AG04449 (cell line): ENCODE measurements at regions of chr9 and their contacts with region 1.

Region 1: GRCh38 chr9:134449221-134449894 is 123.1 kb downstream of the RXRA start:
- DNase-seq: peak; percentile 74
- H3K4me3 ChIP-seq: no peak overlapping the region
- CTCF ChIP-seq: peak; percentile 98

Region 2: GRCh38 chr9:134175808-134176598 is 273.4 kb before region 1 on chr9:
- CTCF ChIA-PET with region 1: interaction called, 138 read pairs
- POLR2A ChIA-PET with region 1: no interaction called
- DNase-seq: no peak
- H3K4me3 ChIP-seq: no peak overlapping the region
- CTCF ChIP-seq: peak; percentile 23

Region 3: GRCh38 chr9:134592018-134592818 is 142.9 kb after region 1 on chr9:
- CTCF ChIA-PET with region 1: no interaction called
- POLR2A ChIA-PET with region 1: no interaction called
- DNase-seq: no peak
- H3K4me3 ChIP-seq: peak overlapping the region; percentile 15
- CTCF ChIP-seq: no peak

Region 4: DNA sequence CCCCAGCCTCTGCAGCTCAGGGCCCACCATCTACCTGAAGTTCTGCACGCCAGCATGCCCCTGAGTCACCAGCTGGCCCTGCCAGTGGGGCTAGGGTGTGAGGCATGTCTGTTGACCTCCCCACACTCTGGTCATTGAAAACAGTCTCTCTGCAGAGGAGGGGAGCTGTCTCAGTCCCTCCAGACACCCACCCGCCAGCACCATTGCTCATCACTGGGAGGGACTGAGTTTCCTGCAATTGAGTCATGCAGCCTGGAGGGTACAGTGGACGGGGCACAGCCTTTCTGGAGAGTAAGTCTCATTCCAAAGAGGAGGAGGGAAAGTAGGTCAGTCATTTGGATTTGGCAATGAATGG is 175.4 kb after region 1 on chr9:
- CTCF ChIA-PET with region 1: interaction called, 15 read pairs
- POLR2A ChIA-PET with region 1: interaction called, 3 read pairs
- DNase-seq: peak; percentile 71
- H3K4me3 ChIP-seq: no peak overlapping the region
- CTCF ChIP-seq: no peak

Region 5: DNA sequence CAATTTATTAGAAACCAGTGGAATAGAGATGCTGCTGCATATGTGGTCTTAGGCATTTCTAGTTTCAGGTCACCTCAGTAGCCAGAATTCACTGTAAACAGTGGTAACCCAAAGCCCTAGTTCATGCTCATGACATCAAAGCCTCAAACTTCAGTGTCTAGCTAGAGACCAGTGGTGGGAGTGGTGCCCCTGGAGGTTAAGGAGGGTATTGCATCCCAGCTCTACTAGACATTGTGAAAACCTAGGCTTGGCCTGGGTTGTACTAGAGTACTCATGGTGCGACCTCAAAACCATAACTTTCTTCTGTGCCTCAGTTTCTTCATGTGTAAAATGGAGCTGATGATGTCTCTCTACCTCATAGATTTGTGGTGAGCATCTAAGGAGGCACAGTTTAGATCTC is 211.0 kb after region 1 on chr9:
- CTCF ChIA-PET with region 1: interaction called, 22 read pairs
- POLR2A ChIA-PET with region 1: no interaction called
- DNase-seq: no peak
- H3K4me3 ChIP-seq: no peak overlapping the region
- CTCF ChIP-seq: peak; percentile 69

Region 6: DNA sequence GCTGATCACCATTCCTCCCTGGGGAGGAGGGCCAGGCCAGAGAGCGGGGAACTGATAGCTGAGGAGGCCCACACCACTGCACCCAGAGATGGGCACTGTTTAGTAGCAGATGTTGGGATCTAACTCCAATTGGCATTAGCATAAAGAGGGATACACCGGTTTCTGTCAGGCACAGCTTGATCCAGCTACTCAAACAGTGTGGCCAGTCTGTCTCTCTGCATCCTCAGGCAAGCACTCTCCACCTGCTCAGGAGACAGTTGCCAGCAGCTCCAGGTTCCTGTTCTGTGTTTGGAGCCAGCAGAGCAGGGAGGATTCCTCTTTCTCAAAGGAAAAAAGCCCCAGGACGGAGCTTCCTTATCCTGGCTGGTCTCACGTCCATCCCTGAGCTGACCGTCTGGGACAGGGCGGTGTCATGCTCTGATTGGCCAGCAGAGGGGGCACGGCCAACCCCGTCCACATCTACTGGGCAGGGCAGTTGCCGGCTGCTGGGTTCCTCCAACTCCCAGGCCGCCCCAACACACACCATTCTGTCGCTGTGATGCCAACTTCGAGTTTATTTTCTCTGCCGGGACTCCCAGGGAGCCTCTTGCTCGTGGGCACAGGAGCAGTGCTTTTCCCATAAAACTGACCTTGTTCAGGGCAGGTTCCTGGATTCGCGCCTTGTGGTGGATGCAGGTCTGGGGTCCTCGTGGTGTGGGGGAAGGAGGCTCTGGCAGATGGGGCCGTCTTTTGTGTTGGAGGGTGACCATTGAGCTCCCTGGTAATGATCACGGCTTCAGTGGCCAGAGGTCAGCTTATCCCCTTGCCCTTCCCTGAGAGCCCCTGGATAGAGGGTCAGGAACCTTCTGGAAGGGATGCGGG is 240.2 kb after region 1 on chr9:
- CTCF ChIA-PET with region 1: interaction called, 31 read pairs
- POLR2A ChIA-PET with region 1: no interaction called
- DNase-seq: no peak
- H3K4me3 ChIP-seq: no peak overlapping the region
- CTCF ChIP-seq: peak; percentile 93

Region 7: DNA sequence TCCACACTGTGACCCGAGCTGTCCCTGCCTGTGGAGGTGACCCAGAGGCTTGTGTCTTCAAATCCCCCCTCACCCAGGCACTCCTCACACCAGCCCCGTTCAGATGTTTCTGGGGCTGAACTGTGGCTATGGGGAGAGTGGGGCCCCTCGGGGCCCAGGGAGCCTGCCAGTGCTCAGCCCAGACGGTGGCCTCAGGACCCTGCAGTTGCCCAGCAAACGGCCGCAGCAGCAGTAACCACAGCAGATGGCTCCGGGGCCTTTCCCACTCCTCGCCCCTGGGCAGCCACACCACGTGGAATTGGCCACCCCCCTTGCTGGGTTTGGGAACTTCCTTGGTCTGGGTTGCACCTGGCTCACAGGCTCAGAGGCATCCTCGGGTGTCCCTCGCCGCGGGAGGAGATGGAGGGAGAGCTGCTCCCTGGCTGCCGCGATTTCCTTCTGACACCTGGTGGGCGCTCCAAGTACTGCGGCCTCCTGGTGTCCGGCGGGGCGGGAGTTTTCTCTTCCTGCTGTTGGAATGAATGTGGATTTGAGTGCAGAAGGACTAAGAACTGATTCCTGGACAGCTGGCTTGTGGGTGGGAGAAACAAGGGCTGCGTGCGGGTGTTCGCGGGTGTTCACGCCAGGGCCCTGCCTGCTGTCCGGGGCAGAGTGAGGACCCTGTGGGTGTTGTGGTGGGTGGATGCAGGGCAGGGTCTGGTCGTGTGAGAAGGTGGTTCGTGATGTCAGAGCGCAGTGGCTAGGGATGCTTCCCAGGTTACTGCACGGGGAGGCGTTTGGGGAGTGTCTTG is 289.7 kb after region 1 on chr9:
- CTCF ChIA-PET with region 1: interaction called, 52 read pairs
- POLR2A ChIA-PET with region 1: no interaction called
- DNase-seq: no peak
- H3K4me3 ChIP-seq: no peak overlapping the region
- CTCF ChIP-seq: peak; percentile 85

Region 8: DNA sequence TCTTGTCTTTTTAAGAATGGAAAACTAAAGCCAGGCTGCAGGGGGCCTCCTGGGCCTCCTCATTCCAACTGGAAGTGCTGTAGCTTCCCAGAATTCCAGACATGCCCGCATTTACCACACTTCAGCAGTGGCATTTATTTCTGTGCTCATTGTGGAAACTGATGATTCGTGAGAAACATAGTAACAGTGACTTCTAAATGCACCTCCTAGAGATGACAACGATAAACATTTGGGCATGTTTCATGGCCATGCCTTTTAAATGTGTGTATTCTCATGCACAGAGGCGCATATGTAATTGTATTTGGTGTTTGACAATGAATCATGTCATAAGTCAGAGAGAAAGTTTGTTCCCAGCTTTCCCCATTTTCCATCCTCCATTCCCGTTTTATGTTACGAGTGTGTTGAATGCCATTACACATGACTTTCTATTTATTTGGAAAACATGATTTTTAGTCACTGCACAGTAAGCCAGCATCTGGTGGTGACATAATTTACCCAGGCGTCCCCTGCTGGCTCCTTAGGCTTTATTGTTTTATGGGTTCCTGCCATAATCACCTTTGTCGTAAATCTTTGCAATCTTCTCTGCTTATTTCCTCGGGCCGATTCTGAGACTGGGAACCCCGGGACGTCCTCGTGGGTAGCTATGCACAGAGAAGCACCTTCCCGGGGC is 362.4 kb after region 1 on chr9:
- CTCF ChIA-PET with region 1: interaction called, 15 read pairs
- POLR2A ChIA-PET with region 1: no interaction called
- DNase-seq: peak; percentile 94
- H3K4me3 ChIP-seq: no peak overlapping the region; the same call in 1 of the 2 replicates
- CTCF ChIP-seq: no peak

Region 9: DNA sequence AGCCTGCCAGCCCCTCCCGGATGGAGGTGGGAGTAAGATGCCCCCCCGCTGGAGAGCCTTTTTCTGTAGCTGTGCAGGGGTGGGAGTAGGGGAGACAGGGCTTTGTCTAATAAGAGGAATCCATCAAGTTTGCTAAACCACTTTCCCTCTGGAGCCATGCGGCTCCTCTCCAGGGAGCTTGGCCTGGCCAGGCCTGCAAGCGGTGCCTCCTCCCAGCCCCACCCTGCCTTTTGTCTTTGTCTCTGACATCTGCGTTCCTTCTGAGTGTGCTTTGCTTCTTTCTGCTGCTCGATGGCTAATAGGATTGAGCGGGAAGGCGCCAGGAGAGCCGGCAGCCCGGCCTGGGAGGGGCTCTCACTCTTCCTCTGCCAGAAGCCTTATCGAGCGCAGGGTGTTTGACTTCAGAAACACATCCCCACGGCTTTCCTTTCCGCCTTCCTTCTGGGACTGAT is 495.0 kb after region 1 on chr9:
- CTCF ChIA-PET with region 1: no interaction called
- POLR2A ChIA-PET with region 1: no interaction called
- DNase-seq: no peak
- H3K4me3 ChIP-seq: no peak overlapping the region
- CTCF ChIP-seq: no peak